ENCODE measurements at regions of chr14 and their contacts with region 1.

Region 1: DNA sequence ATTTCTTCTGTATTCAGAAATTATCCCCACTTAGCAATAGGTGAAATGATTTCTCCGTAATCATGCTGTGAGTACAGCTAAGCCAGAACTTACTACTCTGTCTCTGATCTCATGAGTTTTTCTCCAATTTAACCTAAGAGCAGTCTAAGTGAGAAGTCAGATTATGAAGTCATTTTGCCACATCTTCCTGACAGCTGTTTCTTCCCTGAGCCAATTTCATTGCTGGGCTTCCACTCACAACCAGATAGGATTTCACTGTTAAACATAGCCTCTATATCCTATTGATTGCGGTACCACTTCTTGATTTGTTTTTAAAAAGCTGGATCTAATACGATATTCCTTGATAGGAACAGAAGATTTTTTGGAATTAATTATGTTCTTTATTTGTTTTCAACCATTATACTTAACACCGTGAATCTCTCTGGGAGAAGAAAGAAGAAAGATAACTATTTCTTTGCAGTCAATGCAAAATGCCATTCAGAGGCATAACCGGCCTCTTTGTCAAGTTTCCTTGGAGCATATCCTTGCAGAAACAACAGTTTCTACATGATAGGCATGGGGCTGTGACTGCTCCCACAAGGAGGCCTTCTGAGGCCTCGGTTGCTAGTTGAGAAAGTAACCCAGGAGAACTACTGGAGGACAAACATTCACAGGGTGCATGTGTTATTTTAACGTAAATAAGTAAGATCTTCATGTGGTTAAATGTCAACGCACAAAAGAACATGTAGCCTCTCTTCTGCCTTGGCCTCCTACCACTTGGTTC is 212.2 kb downstream of the NPAS3 start:
- DNase-seq: no peak
- H3K4me3 ChIP-seq: no peak overlapping the region
- H3K27ac ChIP-seq: no peak overlapping the region
- H3K4me1 ChIP-seq: no peaks in the 10 kb centered on the region
- H3K27me3 ChIP-seq: no peaks in the 10 kb centered on the region
- CTCF ChIP-seq: no peak
- POLR2A ChIP-seq: no peak

Region 2: DNA sequence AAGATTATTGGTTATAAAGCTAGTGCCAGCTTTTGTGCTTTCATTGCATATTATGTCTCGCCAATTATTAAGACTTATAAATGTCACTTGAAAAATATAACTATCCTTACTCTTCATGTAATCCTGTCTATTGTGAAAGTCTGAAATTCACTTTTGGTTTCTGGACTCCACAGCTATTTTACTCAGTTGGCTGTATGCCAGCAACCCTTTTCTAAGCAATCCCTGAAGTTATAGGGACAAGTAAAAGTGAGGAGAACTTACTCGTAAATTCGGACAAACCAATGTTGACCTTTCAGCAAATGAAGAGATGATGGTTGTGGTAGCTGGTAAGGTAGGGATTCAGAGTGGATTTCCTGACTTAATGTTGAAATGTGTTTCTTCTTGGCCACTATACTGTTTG is 15.9 kb before region 1 on chr14:
- CTCF ChIA-PET with region 1: no interaction called
- POLR2A ChIA-PET with region 1: no interaction called
- dilution Hi-C with region 1: no loop called
- intact Hi-C with region 1: no loop called
- DNase-seq: no peak
- H3K4me3 ChIP-seq: no peak overlapping the region
- H3K27ac ChIP-seq: no peak overlapping the region
- H3K4me1 ChIP-seq: no peaks in the 10 kb centered on the region
- H3K27me3 ChIP-seq: peaks cover 0 to 3% of the 10 kb centered on the region in 2 experiments
- CTCF ChIP-seq: no peak
- POLR2A ChIP-seq: no peak

Region 3: DNA sequence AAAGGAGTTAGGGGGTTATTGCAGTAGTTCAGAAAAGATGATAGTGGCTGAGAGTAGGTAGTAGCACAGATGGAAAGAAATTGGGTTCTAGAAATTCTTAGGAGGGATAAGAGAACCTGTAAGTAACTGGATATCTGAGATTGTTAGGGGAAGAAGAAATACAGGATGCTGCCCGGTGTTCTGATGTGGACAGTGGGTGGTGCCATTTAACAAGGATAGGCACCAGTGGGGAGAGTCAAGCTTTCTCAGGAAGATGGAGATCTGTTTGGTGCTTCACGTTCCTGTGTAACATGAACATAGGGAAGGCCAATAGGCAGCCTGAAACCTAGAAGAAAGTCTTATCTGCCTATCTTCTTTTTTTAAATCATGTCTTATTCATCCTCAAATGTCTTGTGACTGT is 33.7 kb after region 1 on chr14:
- CTCF ChIA-PET with region 1: no interaction called
- POLR2A ChIA-PET with region 1: no interaction called
- dilution Hi-C with region 1: no loop called
- intact Hi-C with region 1: loop called (anchors 1 kb)
- DNase-seq: peak; percentile 14
- H3K4me3 ChIP-seq: no peak overlapping the region
- H3K27ac ChIP-seq: no peak overlapping the region
- H3K4me1 ChIP-seq: no peaks in the 10 kb centered on the region
- H3K27me3 ChIP-seq: no peaks in the 10 kb centered on the region
- CTCF ChIP-seq: no peak
- POLR2A ChIP-seq: no peak

Region 4: DNA sequence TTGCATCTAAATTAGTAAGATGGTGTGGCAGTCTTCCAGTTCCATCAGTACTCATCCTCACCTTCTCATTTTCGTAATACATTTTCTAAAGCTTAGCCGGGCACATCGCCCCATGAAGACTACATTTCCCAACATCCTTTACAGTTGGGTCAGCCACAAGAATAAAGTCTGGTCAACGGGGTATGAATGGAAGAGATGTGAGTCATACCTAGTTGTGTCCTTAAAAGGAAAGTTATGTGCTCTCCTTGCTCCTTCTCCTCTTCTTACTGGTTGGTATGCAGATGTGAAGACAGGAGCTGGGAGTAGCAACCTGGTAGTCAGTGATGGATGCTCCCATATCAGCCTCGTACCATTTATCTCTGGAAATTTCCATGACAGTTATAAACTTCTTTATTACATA is 836.0 kb after region 1 on chr14:
- CTCF ChIA-PET with region 1: no interaction called
- POLR2A ChIA-PET with region 1: no interaction called
- dilution Hi-C with region 1: no loop called
- intact Hi-C with region 1: no loop called
- DNase-seq: peak; percentile 3
- H3K4me3 ChIP-seq: no peak overlapping the region
- H3K27ac ChIP-seq: no peak overlapping the region
- H3K4me1 ChIP-seq: no peaks in the 10 kb centered on the region
- H3K27me3 ChIP-seq: peaks cover 0 to 2% of the 10 kb centered on the region in 2 experiments
- CTCF ChIP-seq: no peak
- POLR2A ChIP-seq: no peak

Measured in endothelial cell of umbilical vein (primary cell).